A673 (cell line): ENCODE measurements at regions of chr16 and their contacts with region 1.

Region 1: DNA sequence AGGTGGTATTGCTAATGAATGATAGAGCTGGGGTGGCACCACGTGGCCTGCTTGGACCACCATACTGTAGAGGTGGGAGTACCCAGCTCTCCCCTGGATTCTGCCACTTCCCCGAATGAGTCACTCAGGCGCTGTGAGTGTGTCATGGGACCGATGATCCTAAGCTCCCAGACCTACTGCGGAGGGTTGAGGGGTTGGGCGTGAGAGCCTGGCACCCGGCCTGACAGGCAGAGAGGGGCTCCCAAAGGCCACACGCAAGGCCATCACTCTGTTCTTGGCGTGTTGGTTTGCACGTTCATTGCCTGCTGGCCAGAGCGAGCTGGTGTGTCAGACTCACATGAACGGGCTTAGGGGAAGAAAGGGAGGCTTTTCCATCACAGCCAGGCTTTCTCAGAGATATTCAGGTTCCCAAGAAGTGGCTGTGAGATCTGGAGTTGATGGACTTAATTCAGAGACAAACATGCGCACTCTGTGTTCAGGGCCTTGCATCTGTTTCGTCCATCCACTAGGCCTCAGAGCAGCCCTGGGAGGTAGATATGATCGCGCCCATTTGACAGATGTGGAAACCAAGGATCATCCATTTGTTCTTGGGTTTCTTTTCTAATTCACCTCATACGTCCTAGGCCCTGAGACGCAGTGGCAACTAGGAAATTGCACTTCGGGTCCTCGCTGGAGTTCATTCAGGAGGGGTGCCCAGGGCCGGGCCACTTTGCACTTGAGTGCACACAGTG is 41.4 kb downstream of the CMIP start:
- DNase-seq: no peak
- H3K4me3 ChIP-seq: no peak overlapping the region
- H3K27ac ChIP-seq: no peak overlapping the region
- H3K4me1 ChIP-seq: no peaks in the 10 kb centered on the region
- H3K27me3 ChIP-seq: no peaks in the 10 kb centered on the region
- CTCF ChIP-seq: no peak

Region 2: GRCh38 chr16:81053761-81054160 is 432.2 kb before region 1 on chr16:
- CTCF ChIA-PET with region 1: no interaction called
- POLR2A ChIA-PET with region 1: no interaction called
- intact Hi-C with region 1: no loop called
- DNase-seq: no peak
- H3K4me3 ChIP-seq: no peak overlapping the region
- H3K27ac ChIP-seq: no peak overlapping the region
- H3K4me1 ChIP-seq: no peaks in the 10 kb centered on the region
- H3K27me3 ChIP-seq: no peaks in the 10 kb centered on the region
- CTCF ChIP-seq: no peak

Region 3: GRCh38 chr16:81410643-81411293 is 75.2 kb before region 1 on chr16:
- CTCF ChIA-PET with region 1: interaction called, 17 read pairs
- POLR2A ChIA-PET with region 1: no interaction called
- intact Hi-C with region 1: no loop called
- DNase-seq: no peak
- H3K4me3 ChIP-seq: no peak overlapping the region
- H3K27ac ChIP-seq: no peak overlapping the region
- H3K4me1 ChIP-seq: no peaks in the 10 kb centered on the region
- H3K27me3 ChIP-seq: no peaks in the 10 kb centered on the region
- CTCF ChIP-seq: no peak